A673 (cell line): ENCODE measurements at regions of chr2 and their contacts with region 1.

Region 1: GRCh38 chr2:235595422-235596010 is 101.7 kb downstream of the AGAP1 start:
- DNase-seq: peak; percentile 83
- H3K4me3 ChIP-seq: no peak overlapping the region
- H3K27ac ChIP-seq: no peak overlapping the region
- H3K4me1 ChIP-seq: no peaks in the 10 kb centered on the region
- H3K27me3 ChIP-seq: no peaks in the 10 kb centered on the region
- CTCF ChIP-seq: peak; percentile 88

Region 2: DNA sequence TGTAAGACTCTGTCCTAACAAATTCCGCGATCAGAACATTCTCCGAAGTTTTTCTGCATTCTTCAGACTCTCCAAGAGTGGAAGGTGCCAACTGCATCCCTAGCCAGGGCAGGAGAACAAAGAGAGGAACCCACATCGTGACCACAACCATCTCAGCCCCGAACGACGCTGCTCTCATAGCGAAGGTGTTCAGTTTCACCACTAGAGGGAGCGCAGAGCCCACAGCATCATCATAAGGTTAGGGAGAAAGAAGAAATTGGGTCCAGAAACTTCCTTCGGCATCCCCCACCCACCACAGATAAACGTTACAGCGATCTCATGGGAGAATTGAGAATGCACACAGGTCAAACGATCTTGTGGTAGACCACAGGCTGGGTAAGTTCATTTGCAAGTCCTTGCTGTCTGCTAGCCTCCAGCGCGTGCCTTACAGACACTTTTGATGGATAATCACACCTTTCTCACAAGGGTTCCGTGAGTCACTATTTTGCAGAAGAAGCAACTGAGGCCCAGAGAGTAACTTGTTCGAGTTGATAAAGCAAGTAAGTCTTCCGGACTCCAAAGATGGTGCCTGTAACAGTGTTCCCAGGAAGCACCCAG is 1044.9 kb before region 1 on chr2:
- CTCF ChIA-PET with region 1: no interaction called
- POLR2A ChIA-PET with region 1: no interaction called
- intact Hi-C with region 1: loop called (anchors 5 kb)
- DNase-seq: peak; percentile 86
- H3K4me3 ChIP-seq: no peak overlapping the region
- H3K27ac ChIP-seq: no peak overlapping the region
- H3K4me1 ChIP-seq: no peaks in the 10 kb centered on the region
- H3K27me3 ChIP-seq: no peaks in the 10 kb centered on the region
- CTCF ChIP-seq: peak; percentile 93

Region 3: DNA sequence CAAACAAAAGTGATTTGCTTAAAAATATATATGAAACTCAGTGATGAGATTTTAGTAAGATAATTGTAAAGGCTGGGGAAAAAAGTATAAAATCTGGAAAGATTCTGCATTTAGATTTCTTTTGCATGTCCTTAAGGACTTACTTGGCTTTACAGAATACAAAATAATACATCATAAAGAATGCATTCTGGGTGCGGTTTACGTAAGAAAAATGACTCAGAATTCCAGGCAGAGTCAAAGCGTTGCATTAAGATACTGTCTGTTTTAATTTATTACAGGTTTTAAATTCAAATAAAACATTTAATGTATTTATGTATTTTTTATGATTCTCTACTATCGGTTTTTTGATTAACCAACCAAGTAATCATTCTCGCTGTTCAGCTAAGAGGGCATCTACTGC is 465.7 kb before region 1 on chr2:
- CTCF ChIA-PET with region 1: interaction called, 8 read pairs
- POLR2A ChIA-PET with region 1: no interaction called
- intact Hi-C with region 1: loop called (anchors 5 kb)
- DNase-seq: no peak
- H3K4me3 ChIP-seq: no peak overlapping the region
- H3K27ac ChIP-seq: no peak overlapping the region
- H3K4me1 ChIP-seq: peaks cover 31% of the 10 kb centered on the region
- H3K27me3 ChIP-seq: no peaks in the 10 kb centered on the region
- CTCF ChIP-seq: no peak

Region 4: DNA sequence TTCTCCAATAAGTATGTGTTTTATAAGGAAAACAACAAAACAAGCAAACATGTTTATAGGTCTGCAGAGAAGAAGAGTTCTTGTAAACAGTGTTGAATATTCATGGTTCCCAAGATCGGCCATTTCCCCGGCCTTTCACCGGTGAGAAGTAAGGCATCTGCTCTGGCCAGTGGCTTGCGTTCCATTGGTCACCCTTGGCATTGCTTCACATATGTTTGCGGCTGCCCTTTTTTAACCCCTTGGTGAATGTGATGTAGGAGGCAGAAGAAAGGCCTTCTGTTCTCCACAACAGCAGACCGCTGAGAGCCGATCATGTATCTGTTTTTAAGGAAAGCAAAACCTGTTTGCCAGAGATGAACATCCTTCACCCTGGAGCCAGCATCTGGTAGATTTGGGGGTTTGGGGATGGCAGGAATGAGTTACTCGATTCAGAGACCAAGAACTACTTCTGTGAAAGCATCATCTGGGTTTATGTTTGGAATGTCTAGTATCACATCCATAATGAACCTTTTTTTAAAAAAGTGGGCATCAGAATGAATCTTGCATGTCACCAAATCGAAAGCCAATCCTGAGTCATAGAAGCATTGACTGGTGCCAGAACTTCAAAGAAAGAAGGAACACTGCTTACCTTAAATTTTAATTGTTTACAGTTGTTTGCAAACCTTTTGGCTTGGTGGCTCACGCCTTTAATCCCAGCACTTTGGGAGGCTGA is 10.6 kb after region 1 on chr2:
- CTCF ChIA-PET with region 1: interaction called, 10 read pairs
- POLR2A ChIA-PET with region 1: no interaction called
- intact Hi-C with region 1: no loop called
- DNase-seq: no peak
- H3K4me3 ChIP-seq: no peak overlapping the region
- H3K27ac ChIP-seq: no peak overlapping the region
- H3K4me1 ChIP-seq: no peaks in the 10 kb centered on the region
- H3K27me3 ChIP-seq: no peaks in the 10 kb centered on the region
- CTCF ChIP-seq: no peak

Region 5: GRCh38 chr2:235746257-235747084 is 151.0 kb after region 1 on chr2:
- CTCF ChIA-PET with region 1: interaction called, 34 read pairs
- POLR2A ChIA-PET with region 1: no interaction called
- intact Hi-C with region 1: loop called (anchors 1 kb)
- DNase-seq: peak; percentile 84
- H3K4me3 ChIP-seq: no peak overlapping the region
- H3K27ac ChIP-seq: no peak overlapping the region
- H3K4me1 ChIP-seq: peaks cover 7% of the 10 kb centered on the region
- H3K27me3 ChIP-seq: no peaks in the 10 kb centered on the region
- CTCF ChIP-seq: peak; percentile 89